Activated CD4-positive, alpha-beta memory T cell treated with anti-CD3 and anti-CD28 coated beads for 36 hours (primary cell): ENCODE measurements at regions of chr1 and their contacts with region 1.

Region 1: GRCh38 chr1:209747580-209748262 is 8.1 kb upstream of the TRAF3IP3 start:
- DNase-seq: peak; percentile 96
- H3K4me3 Mint-ChIP-seq: peak overlapping the region; percentile 62
- H3K27ac Mint-ChIP-seq: peak overlapping the region; percentile 87
- H3K4me1 Mint-ChIP-seq: peaks cover 79% of the 10 kb centered on the region
- H3K27me3 Mint-ChIP-seq: no peaks in the 10 kb centered on the region

Region 2: GRCh38 chr1:209354111-209354839 is 393.4 kb before region 1 on chr1:
- CTCF ChIA-PET with region 1: no interaction called
- POLR2A ChIA-PET with region 1: no interaction called
- intact Hi-C with region 1: no loop called
- DNase-seq: peak; percentile 60
- H3K4me3 Mint-ChIP-seq: no peak overlapping the region
- H3K27ac Mint-ChIP-seq: no peak overlapping the region
- H3K4me1 Mint-ChIP-seq: no peaks in the 10 kb centered on the region
- H3K27me3 Mint-ChIP-seq: no peaks in the 10 kb centered on the region

Region 3: DNA sequence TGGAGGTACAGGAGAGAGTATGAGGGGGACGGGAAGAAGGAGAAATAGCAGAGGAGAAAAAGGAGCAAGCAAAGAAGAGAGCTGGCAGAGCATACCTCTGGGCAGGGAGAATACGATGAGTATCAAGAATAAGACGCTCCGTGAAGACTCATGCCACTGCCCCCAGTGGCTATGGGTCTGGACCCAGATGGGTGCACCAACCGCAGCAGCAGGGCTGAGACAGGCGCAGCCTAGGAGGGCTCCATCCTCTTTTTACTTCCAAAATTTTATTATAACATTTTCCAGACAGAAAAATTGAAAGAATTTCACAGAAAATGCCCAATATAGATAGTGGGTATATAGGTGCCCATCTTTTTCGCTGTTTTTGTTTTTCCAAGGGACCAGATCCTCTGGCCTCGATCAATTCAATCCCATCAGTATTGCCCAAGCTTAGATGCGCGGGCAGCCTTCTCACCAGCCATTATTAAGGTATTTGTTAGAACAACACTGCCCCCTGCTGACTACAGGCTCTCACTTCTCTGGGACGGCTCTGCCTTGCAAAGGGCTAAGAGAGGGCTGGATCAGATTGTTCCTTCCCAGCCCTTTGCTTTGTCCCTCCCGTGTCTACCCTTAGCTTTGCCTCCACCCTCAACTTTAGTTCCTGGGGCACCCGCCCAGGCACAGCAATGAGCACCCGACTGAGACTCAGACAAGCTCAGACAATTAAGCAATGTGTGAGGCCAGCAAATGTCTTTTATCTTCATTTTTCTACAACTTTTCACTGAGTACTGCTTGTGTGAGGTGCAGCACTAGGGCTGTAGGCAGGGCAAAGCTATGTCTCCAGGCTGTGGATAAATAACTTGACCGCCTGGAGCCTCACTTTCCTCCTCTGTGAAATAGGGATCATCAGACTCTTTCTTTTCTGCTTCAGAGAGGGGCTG is 181.7 kb before region 1 on chr1:
- CTCF ChIA-PET with region 1: interaction called, 21 read pairs
- POLR2A ChIA-PET with region 1: no interaction called
- intact Hi-C with region 1: loop called (anchors 1 kb)
- DNase-seq: peak; percentile 82
- H3K4me3 Mint-ChIP-seq: no peak overlapping the region
- H3K27ac Mint-ChIP-seq: no peak overlapping the region
- H3K4me1 Mint-ChIP-seq: peaks cover 28% of the 10 kb centered on the region
- H3K27me3 Mint-ChIP-seq: peaks cover 25% of the 10 kb centered on the region

Region 4: GRCh38 chr1:209627732-209628196 is 120.0 kb before region 1 on chr1:
- CTCF ChIA-PET with region 1: interaction called, 16 read pairs
- POLR2A ChIA-PET with region 1: interaction called, 3 read pairs
- intact Hi-C with region 1: loop called (anchors 1 kb)
- DNase-seq: peak; percentile 88
- H3K4me3 Mint-ChIP-seq: no peak overlapping the region
- H3K27ac Mint-ChIP-seq: no peak overlapping the region
- H3K4me1 Mint-ChIP-seq: peaks cover 14% of the 10 kb centered on the region
- H3K27me3 Mint-ChIP-seq: no peaks in the 10 kb centered on the region

Region 5: GRCh38 chr1:209692745-209693504 is 54.8 kb before region 1 on chr1:
- CTCF ChIA-PET with region 1: interaction called, 32 read pairs
- POLR2A ChIA-PET with region 1: no interaction called
- intact Hi-C with region 1: loop called (anchors 1 kb)
- DNase-seq: peak; percentile 83
- H3K4me3 Mint-ChIP-seq: peak overlapping the region; percentile 22
- H3K27ac Mint-ChIP-seq: peak overlapping the region; percentile 7
- H3K4me1 Mint-ChIP-seq: peaks cover 61% of the 10 kb centered on the region
- H3K27me3 Mint-ChIP-seq: no peaks in the 10 kb centered on the region

Region 6: GRCh38 chr1:209733409-209734192 is 14.1 kb before region 1 on chr1:
- CTCF ChIA-PET with region 1: interaction called, 62 read pairs
- POLR2A ChIA-PET with region 1: interaction called, 35 read pairs
- intact Hi-C with region 1: loop called (anchors 1 kb)
- DNase-seq: no peak
- H3K4me3 Mint-ChIP-seq: peak overlapping the region; percentile 54
- H3K27ac Mint-ChIP-seq: peak overlapping the region; percentile 75
- H3K4me1 Mint-ChIP-seq: peaks cover 49% of the 10 kb centered on the region
- H3K27me3 Mint-ChIP-seq: no peaks in the 10 kb centered on the region

Region 7: GRCh38 chr1:209827384-209828262 is 79.9 kb after region 1 on chr1 and contains the start of gene UTP25:
- CTCF ChIA-PET with region 1: interaction called, 9 read pairs
- POLR2A ChIA-PET with region 1: interaction called, 3 read pairs
- intact Hi-C with region 1: loop called (anchors 1 kb)
- DNase-seq: peak; percentile 97
- H3K4me3 Mint-ChIP-seq: peak within 1 kb of the TSS; percentile 93
- H3K27ac Mint-ChIP-seq: peak within 1 kb of the TSS; percentile 88
- H3K4me1 Mint-ChIP-seq: peaks cover 42% of the 10 kb centered on the region
- H3K27me3 Mint-ChIP-seq: peaks cover 4% of the 10 kb centered on the region
- total RNA-seq, gene UTP25: 6.6 to 7.1 TPM

Region 8: DNA sequence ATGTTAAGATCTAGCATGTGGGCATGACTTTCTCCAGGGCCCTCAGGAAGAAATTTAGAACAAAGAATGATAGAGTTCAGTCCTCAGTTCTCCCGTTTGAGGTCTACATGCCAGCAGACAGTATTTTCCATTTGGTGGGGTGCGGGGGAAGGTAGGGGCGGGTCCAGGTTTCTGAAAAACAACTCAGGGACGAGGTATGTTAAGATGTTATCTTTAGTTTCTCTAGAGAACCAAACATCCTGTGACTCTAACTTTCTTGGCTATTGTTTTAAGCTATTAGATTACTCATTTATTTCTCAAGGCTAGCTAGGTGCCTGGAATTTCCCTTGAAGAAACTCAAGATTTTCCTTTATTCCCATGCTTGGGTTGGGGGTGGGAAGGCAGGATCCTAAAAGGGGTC is 148.0 kb after region 1 on chr1:
- CTCF ChIA-PET with region 1: no interaction called
- POLR2A ChIA-PET with region 1: no interaction called
- intact Hi-C with region 1: no loop called
- DNase-seq: peak; percentile 37
- H3K4me3 Mint-ChIP-seq: no peak overlapping the region
- H3K27ac Mint-ChIP-seq: no peak overlapping the region
- H3K4me1 Mint-ChIP-seq: peaks cover 8% of the 10 kb centered on the region
- H3K27me3 Mint-ChIP-seq: peaks cover 15% of the 10 kb centered on the region